CD14-positive monocyte (primary cell): ENCODE measurements at regions of chr5 and their contacts with region 1.

Region 1: GRCh38 chr5:95022967-95023695 is 261.8 kb downstream of the MCTP1 start:
- DNase-seq: peak; percentile 46 to 77 (median 49)
- H3K4me3 ChIP-seq: no peak overlapping the region
- H3K4me3 Mint-ChIP-seq: no peak overlapping the region
- H3K27ac ChIP-seq: peak overlapping the region in 1 of 2 donors; percentile 44
- H3K27ac Mint-ChIP-seq: peak overlapping the region; percentile 23 to 83 (median 59)
- H3K4me1 ChIP-seq: peaks cover 41 to 49% of the 10 kb centered on the region in 2 donors
- H3K4me1 Mint-ChIP-seq: peaks cover 61% of the 10 kb centered on the region
- H3K27me3 ChIP-seq: no peaks in the 10 kb centered on the region
- H3K27me3 Mint-ChIP-seq: no peaks in the 10 kb centered on the region
- CTCF ChIP-seq: no peak

Region 2: DNA sequence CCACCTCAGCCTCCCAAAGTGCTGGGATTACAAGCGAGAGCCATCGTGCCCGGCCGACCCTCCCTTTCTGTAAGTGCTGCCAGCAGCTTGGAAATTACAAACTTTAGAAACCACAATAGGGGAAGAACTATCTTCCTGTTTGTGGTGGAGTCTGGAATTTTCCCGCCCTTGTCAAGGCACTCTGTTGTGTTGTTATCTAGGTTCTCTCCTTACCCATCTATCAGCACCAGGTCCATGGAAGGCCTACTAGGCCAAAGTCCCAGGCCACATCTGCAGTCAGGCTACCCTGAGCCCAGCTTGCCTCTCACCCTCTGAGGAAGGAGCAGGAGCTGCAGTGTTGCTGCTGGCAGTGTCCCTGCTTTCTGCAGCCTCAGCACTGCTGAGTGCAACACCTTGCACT is 46.8 kb after region 1 on chr5:
- intact Hi-C with region 1: loop called in 1 of 2 experiments (anchors 10 kb)
- DNase-seq: peak in 2 of 3 donors; percentile 69 to 89
- H3K4me3 ChIP-seq: peak overlapping the region in 1 of 3 experiments; percentile 48
- H3K4me3 Mint-ChIP-seq: peak overlapping the region; percentile 59 to 60
- H3K27ac ChIP-seq: peak overlapping the region; percentile 27 to 68
- H3K27ac Mint-ChIP-seq: peak overlapping the region; percentile 44 to 90 (median 80)
- H3K4me1 ChIP-seq: peaks cover 47 to 64% of the 10 kb centered on the region in 2 donors
- H3K4me1 Mint-ChIP-seq: peaks cover 72% of the 10 kb centered on the region
- H3K27me3 ChIP-seq: no peaks in the 10 kb centered on the region
- H3K27me3 Mint-ChIP-seq: no peaks in the 10 kb centered on the region
- CTCF ChIP-seq: no peak

Region 3: DNA sequence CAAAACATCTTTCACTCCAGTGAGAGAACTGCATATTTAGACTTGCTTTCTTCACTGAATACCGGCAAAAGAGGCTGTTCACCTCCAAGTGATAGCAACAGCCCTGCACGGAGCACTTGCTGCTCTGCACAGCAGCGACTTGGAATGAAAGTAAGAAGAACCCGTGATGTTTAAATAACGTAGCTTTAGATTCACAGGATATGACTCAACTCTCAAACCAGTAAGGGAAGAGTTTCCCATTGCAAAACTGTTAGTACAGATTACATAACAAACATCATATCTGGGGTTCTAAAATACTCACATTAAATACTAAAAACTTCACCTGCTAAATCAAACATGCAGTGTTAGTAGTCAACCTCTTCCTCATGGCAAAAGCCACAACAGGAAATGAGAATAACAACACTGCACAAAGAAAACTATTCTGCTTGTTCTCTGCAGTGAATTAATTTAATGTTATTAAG is 58.4 kb after region 1 on chr5:
- intact Hi-C with region 1: loop called (anchors 10 kb)
- DNase-seq: peak; percentile 84 to 95 (median 94)
- H3K4me3 ChIP-seq: peak overlapping the region; percentile 83 to 100 (median 94)
- H3K4me3 Mint-ChIP-seq: peak overlapping the region; percentile 76 to 93
- H3K27ac ChIP-seq: peak overlapping the region; percentile 63 to 93
- H3K27ac Mint-ChIP-seq: peak overlapping the region; percentile 90 to 98 (median 95)
- H3K4me1 ChIP-seq: peaks cover 30 to 48% of the 10 kb centered on the region in 2 donors
- H3K4me1 Mint-ChIP-seq: peaks cover 46% of the 10 kb centered on the region
- H3K27me3 ChIP-seq: no peaks in the 10 kb centered on the region
- H3K27me3 Mint-ChIP-seq: peaks cover 0 to 3% (median 0%) of the 10 kb centered on the region in 3 donors
- CTCF ChIP-seq: no peak